Left lung (tissue), 14 donors: ENCODE measurements at regions of chr17 and their contacts with region 1.

Region 1: DNA sequence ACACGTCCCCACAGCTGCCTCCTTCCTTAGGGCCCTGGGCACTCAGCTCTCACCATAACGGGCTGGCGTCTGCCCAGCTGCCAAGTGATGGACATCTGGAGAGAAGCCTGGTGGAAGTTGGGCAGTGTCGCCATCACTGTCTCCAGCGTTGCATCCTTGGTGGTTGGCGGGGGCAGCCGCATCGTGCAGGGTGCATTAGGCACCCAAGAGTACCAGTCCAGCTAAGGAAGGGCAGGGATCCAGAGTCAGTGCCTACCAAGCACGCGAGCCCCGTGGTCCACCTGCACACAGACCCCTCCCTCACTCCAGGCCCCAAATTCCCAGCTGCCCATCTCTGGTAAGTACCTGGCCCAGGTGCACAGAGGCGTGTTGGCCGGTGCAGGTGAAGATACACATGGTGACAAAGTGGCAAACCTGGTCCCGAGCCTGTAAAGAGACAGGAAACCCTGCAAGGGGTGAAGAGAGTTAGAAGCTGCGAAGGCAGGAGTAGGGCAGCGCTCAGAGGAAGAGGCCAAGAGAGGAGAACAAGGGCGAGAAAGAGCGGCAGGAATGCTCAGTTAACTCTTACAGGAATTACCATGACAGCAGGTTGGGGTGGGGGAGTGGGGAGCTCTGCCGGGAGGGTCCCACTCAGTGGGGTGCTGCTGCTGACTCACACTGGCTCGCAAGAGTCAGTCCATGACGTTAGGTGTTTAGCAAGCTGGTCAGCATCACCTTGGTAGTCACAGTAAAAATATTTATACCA is 9.5 kb downstream of the ALOX15 start:
- DNase-seq: peak in 1 of 4 donors; percentile 30
- ATAC-seq: no peak
- H3K4me3 ChIP-seq: no peak overlapping the region
- H3K27ac ChIP-seq: no peak overlapping the region
- H3K4me1 ChIP-seq: peaks cover 0 to 15% of the 10 kb centered on the region in 2 donors
- H3K27me3 ChIP-seq: peaks cover 8 to 40% of the 10 kb centered on the region in 2 donors
- CTCF ChIP-seq: no peak

Region 2: DNA sequence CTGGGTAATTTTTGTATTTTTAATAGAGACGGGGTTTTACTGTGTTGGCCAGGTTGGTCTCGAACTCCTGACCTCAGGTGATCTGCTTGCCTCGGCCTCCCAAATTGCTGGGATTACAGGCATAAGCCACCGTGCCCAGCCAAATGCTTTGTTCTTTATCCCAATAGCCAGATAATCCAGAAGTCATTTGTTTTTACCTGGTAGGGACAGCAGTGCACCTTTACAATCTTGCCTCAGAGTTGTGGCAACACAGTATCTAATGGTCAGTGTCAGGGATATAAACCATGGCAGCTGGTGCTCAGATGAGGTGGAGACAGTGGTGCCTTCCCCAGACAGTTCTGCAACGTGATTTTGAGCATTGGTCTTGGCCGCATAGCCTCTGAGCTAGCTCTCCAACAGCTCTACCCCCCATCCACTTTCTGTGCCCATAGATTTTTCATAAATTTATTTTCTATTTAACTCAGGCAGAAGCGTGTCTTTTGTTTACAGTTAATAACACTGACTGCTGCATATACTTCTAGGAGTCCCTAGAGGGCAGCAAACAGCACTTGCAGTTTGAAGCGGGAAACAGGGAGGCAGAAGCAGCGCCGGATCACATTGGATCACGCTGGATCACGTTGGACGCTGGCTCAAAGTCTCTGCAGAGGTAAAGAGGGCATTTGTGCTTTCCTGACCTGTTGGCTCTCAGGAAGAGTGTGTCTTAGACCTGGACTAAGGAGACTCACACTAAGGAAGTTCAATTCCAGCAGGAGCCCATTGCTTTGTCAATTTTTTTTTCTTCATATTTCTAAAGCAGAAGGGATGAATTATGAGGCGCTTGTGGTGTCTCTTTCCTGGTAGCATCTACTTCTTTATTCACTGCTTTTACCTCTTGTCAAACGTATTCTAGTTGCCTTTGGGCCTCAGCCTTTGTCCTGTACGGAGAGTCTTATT is 66.5 kb before region 1 on chr17:
- intact Hi-C with region 1: loop called in 1 of 2 experiments (anchors 5 kb)
- DNase-seq: peak in 3 of 4 donors; percentile 62 to 82 (median 62)
- ATAC-seq: peak; percentile 94
- H3K4me3 ChIP-seq: no peak overlapping the region
- H3K27ac ChIP-seq: no peak overlapping the region
- H3K4me1 ChIP-seq: peaks cover 0 to 8% of the 10 kb centered on the region in 2 donors
- H3K27me3 ChIP-seq: no peaks in the 10 kb centered on the region
- CTCF ChIP-seq: peak; percentile 69 to 76